Natural killer cell (primary cell): ENCODE measurements at regions of chr2 and their contacts with region 1.

Region 1: DNA sequence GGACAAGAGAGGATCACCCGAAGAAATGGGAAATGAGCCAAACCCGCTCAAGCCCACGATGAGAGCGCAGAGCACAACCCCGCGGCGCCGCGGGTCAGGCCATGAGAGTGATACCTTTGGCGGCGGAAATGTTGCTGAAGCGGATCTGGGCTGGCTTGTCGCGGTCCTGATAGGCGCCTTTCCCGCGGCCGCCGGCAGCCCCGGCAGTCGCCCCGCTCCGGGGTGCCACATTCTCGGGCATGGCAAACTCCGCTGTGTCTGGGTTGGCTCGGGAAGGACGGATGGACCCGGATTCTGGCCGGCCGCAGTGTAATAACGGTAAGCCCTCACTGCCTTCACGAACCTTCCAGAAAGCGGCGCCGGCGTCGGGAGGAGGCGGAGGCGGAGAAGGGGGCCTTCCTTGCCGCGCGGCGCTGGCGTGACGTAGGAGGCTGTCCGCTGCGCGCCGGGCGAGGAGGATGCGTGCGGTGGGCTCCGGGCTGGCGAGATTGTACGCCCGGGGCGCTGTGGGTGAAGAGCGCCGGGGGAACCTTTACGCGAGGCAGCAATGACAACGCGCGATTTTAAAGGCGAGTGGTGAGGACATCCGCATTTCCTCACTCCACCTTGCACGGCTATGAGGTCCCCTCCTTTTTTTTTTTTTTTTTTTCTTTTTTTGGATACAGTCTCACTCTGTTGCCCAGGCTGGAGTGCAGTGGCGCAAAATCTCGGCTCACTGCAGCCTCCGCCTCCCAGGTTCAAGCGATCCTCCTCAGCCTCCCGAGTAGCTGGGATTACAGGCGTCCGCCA is at the start of gene CCT4:
- DNase-seq: peak; percentile 94 to 96
- ATAC-seq: peak; percentile 86 to 95 (median 89)
- H3K4me3 ChIP-seq: peak within 1 kb of the TSS; percentile 94
- H3K4me3 Mint-ChIP-seq: peak within 1 kb of the TSS; percentile 97
- H3K27ac ChIP-seq: peak within 1 kb of the TSS; percentile 90
- H3K27ac Mint-ChIP-seq: peak within 1 kb of the TSS; percentile 94 to 99
- H3K4me1 ChIP-seq: peaks cover 17% of the 10 kb centered on the region
- H3K4me1 Mint-ChIP-seq: peaks cover 30 to 31% of the 10 kb centered on the region in 2 donors
- H3K27me3 ChIP-seq: no peaks in the 10 kb centered on the region
- H3K27me3 Mint-ChIP-seq: no peaks in the 10 kb centered on the region
- CTCF ChIP-seq: no peak
- total RNA-seq, gene CCT4: 79.4 to 108 (median 84.5) TPM

Region 2: DNA sequence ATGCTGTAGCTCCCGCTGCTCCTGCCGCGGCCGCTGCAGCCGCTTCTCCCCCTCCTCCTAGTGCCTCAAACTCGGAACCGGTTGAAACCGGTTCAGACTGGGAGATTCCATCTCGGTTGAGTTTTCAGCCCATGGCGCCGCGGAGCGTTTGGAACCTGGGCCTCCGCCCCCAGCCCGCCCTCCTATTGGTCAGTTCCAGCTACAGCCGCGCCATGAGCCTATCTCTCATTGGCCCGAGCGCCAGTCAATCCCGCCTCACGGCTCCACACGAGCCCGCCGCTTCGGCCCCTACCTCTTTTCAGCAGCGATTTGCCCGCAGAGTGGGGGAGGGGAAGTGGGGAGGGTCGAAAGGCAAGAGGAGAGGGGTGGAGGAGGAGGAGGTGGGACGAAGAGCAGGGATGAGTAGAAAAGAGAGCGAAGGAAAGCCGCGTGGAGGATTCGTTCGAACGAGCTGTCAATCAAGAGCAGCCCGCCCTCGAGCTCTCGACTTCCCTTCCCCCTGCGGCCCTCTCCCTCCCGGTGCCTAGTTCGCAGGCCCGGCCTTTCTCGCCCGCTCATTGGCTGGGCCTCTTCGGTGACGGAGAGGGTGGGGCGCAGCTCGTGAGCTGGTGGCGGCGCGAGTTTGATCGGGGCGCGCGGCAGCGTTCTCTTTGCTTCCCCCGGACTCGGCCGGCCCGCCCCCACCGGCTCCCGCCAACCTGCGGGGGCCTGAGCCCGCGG is 350.1 kb before region 1 on chr2 and contains the start of gene XPO1:
- intact Hi-C with region 1: no loop called
- DNase-seq: peak; percentile 98 to 99
- ATAC-seq: peak; percentile 77 to 92 (median 83)
- H3K4me3 ChIP-seq: peak within 1 kb of the TSS; percentile 80
- H3K4me3 Mint-ChIP-seq: peak within 1 kb of the TSS; percentile 100
- H3K27ac ChIP-seq: peak within 1 kb of the TSS; percentile 98
- H3K27ac Mint-ChIP-seq: peak within 1 kb of the TSS; percentile 90 to 99
- H3K4me1 ChIP-seq: peaks cover 10% of the 10 kb centered on the region
- H3K4me1 Mint-ChIP-seq: peaks cover 39 to 45% of the 10 kb centered on the region in 2 donors
- H3K27me3 ChIP-seq: no peaks in the 10 kb centered on the region
- H3K27me3 Mint-ChIP-seq: no peaks in the 10 kb centered on the region
- CTCF ChIP-seq: no peak
- total RNA-seq, gene XPO1: 120 to 157 (median 137) TPM

Region 3: GRCh38 chr2:61854474-61855182 is 33.8 kb before region 1 on chr2:
- intact Hi-C with region 1: loop called (anchors 1 kb)
- DNase-seq: peak; percentile 71 to 97
- ATAC-seq: peak; percentile 87 to 94 (median 89)
- H3K4me3 ChIP-seq: peak overlapping the region; percentile 80
- H3K4me3 Mint-ChIP-seq: peak overlapping the region; percentile 99
- H3K27ac ChIP-seq: peak overlapping the region; percentile 64
- H3K27ac Mint-ChIP-seq: peak overlapping the region; percentile 88 to 89
- H3K4me1 ChIP-seq: peaks cover 17% of the 10 kb centered on the region
- H3K4me1 Mint-ChIP-seq: peaks cover 18 to 25% of the 10 kb centered on the region in 2 donors
- H3K27me3 ChIP-seq: no peaks in the 10 kb centered on the region
- H3K27me3 Mint-ChIP-seq: no peaks in the 10 kb centered on the region
- CTCF ChIP-seq: no peak

Region 4: DNA sequence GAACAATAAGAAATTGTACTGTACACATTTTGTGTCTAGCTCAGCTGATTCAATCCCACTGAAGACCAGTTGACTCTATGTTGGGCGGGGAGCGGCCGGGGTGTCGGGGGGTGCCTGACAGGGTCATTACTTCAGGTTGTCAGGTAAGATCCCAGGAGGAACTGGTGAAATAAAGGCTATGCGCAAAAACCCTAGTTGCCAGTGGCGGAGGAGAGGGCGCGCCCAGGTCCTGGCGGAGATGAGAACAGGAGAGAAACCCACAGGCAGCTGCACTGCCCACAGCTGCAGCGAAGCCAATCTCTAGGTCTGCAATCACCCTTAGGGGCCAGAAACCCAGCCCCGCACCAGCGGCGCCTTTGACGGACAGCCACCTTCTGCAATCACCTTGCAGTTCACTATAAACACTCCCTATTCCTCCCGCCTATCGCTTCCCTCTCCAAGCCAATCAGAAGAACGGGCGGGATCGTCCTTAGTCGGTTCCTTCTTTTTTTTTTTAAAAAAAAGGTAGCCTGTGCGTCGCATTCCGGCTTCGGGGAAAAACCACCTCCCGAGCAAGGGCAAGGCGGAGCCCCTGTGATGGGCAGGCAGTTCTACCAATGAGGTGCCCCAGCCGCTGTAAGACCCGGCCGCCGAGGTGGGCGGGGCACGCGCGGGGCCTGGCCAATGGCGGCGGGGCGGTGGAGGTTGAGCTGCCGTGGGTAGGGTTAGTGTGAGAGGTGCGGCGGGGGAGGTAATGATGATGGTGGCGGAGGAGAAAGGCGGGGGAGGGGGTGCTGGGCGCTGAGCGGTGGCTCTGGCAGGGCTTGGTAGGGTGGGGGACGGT is 816.8 kb after region 1 on chr2 and contains the start of gene EHBP1:
- intact Hi-C with region 1: loop called (anchors 5 kb)
- DNase-seq: peak; percentile 97 to 98
- ATAC-seq: peak; percentile 96 to 99 (median 96)
- H3K4me3 ChIP-seq: peak within 1 kb of the TSS; percentile 59
- H3K4me3 Mint-ChIP-seq: peak within 1 kb of the TSS; percentile 91
- H3K27ac ChIP-seq: peak within 1 kb of the TSS; percentile 29
- H3K27ac Mint-ChIP-seq: peak within 1 kb of the TSS; percentile 60 to 90
- H3K4me1 ChIP-seq: peaks cover 15% of the 10 kb centered on the region
- H3K4me1 Mint-ChIP-seq: peaks cover 30 to 38% of the 10 kb centered on the region in 2 donors
- H3K27me3 ChIP-seq: no peaks in the 10 kb centered on the region
- H3K27me3 Mint-ChIP-seq: no peaks in the 10 kb centered on the region
- CTCF ChIP-seq: no peak
- total RNA-seq, gene EHBP1: 22.4 to 33.4 (median 28.3) TPM